Heart right ventricle (tissue), 16 donors: ENCODE measurements at regions of chr11 and their contacts with region 1.

Region 1: DNA sequence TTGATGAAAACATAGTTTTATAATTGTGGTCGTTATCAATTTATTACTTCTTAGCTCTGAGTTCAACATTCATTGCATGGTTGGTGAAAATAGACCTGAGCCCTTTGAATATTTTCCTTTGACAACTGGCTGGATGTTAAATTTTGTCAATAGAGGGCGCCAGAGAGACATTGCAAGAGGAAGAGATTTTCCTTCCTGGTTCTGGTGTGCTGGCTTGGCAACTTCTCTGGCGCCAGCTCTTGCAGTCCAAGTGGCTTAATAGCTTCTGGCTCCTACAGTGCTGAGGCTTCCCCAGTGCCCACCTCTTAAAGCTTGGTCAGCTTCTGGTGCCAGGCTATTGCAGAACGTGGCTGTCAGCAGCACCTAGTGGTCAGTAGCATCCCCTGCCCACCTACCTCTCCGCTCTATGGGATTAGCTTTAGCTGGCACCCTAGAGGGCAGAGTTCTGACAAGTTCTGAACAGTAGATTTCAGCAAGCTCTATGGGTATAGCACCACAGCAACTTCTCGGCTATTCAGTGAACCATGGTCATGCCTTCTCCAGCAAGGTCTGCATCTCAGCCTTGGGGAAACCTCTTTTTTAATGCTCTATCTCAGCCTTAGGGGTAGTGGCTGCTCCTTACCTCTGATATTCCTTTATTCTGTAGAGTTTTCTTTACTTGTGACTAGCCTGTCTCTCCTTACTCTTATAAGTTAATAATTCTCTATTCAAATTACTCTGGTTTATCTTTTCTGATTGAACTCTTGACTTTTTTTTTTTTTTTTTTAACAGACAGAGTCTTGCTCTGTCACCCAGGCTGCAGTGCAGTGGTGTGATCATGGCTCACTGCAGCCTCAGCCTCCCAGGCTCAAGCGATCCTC is 59.4 kb downstream of the ACER3 start:
- DNase-seq: peak; percentile 60 to 81
- ATAC-seq: peak; percentile 87 to 96 (median 89)
- H3K4me3 ChIP-seq: peak overlapping the region in 1 of 10 donors; percentile 25
- H3K27ac ChIP-seq: no peak overlapping the region
- H3K4me1 ChIP-seq: peaks cover 0 to 18% (median 12%) of the 10 kb centered on the region in 9 donors
- H3K27me3 ChIP-seq: no peaks in the 10 kb centered on the region
- CTCF ChIP-seq: peak; percentile 86 to 95 (median 89)

Region 2: GRCh38 chr11:76462317-76462716 is 457.8 kb before region 1 on chr11:
- intact Hi-C with region 1: no loop called
- DNase-seq: no peak
- ATAC-seq: no peak
- H3K4me3 ChIP-seq: no peak overlapping the region
- H3K27ac ChIP-seq: no peak overlapping the region
- H3K4me1 ChIP-seq: peaks cover 0 to 10% (median 5%) of the 10 kb centered on the region in 9 donors
- H3K27me3 ChIP-seq: no peaks in the 10 kb centered on the region
- CTCF ChIP-seq: no peak

Region 3: GRCh38 chr11:76721755-76722677 is 198.1 kb before region 1 on chr11:
- intact Hi-C with region 1: loop called in 1 of 10 experiments (anchors 5 kb)
- DNase-seq: peak; percentile 84 to 85
- ATAC-seq: peak; percentile 86 to 97 (median 92)
- H3K4me3 ChIP-seq: peak overlapping the region in 3 of 10 donors; percentile 16 to 20 (median 20)
- H3K27ac ChIP-seq: no peak overlapping the region
- H3K4me1 ChIP-seq: peaks cover 0 to 12% (median 7%) of the 10 kb centered on the region in 9 donors
- H3K27me3 ChIP-seq: peaks cover 0 to 23% (median 5%) of the 10 kb centered on the region in 7 donors
- CTCF ChIP-seq: peak; percentile 75 to 94 (median 91)

Region 4: DNA sequence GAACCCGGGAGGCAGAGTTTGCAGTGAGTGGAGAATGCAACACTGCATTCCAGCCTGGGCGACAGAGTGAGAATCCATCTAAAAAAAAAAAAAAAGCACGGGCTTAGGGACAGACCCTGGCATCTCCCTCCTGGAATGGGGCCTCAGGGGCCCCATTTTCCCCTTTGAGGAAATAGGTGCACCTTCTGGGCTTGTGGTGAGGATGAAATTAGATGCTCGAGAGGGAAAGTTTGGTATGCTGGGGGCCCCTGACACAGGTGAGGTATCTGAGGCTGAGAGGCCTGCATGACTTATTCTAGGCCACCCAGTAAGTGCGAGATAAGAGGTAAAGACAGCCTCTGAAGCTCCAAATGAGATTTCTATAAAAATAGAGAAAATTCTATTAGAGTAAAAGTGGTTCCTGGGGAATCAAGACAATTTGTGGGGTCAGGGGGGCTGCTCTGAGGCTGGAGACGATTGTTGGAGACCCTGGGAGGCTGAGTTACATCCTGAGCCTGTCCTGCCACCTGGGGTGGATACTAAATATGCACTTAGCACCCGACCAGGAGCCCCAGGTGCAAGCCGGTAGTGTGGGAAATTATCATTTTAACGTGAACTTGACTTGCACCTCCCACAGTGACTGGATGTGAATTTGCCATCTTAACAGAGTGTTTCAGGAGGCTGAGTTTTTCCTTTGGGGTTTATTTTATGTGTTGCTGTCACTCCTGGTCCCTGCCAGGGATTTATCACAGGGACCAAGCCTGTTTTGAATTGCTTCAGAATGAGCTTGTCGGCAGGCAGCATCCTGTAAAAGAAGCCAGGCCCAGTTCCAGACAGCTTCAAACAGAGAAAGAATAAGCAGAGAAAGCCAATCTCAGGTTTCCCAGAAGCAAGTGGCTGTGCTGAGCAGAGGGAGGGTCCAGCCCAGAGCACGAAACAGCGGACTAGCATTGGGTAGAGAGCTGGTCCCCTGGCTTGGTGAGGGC is 185.4 kb before region 1 on chr11:
- intact Hi-C with region 1: loop called in 6 of 10 experiments (anchors 5 kb)
- DNase-seq: no peak
- ATAC-seq: peak in 2 of 8 donors; percentile 4 to 43
- H3K4me3 ChIP-seq: no peak overlapping the region
- H3K27ac ChIP-seq: no peak overlapping the region
- H3K4me1 ChIP-seq: peaks cover 0 to 32% (median 3%) of the 10 kb centered on the region in 9 donors
- H3K27me3 ChIP-seq: peaks cover 0 to 4% (median 0%) of the 10 kb centered on the region in 7 donors
- CTCF ChIP-seq: no peak

Region 5: GRCh38 chr11:76807206-76807875 is 112.8 kb before region 1 on chr11:
- intact Hi-C with region 1: loop called (anchors 1 to 5 kb)
- DNase-seq: peak; percentile 87 to 88
- ATAC-seq: peak; percentile 76 to 92 (median 86)
- H3K4me3 ChIP-seq: peak overlapping the region in 5 of 10 donors; percentile 2 to 38 (median 15)
- H3K27ac ChIP-seq: peak overlapping the region in 2 of 10 donors; percentile 13 to 21
- H3K4me1 ChIP-seq: peaks cover 0 to 40% (median 18%) of the 10 kb centered on the region in 9 donors
- H3K27me3 ChIP-seq: no peaks in the 10 kb centered on the region
- CTCF ChIP-seq: peak; percentile 63 to 88 (median 84)

Region 6: GRCh38 chr11:76860539-76861475 is 59.3 kb before region 1 on chr11 and contains the start of gene ACER3:
- intact Hi-C with region 1: loop called in 3 of 10 experiments (anchors 5 kb)
- DNase-seq: peak; percentile 89 to 95
- ATAC-seq: peak; percentile 97 to 100 (median 98)
- H3K4me3 ChIP-seq: peak within 1 kb of the TSS; percentile 62 to 94 (median 82)
- H3K27ac ChIP-seq: peak within 1 kb of the TSS; percentile 63 to 95 (median 89)
- H3K4me1 ChIP-seq: peaks cover 0 to 70% (median 32%) of the 10 kb centered on the region in 9 donors
- H3K27me3 ChIP-seq: no peaks in the 10 kb centered on the region
- CTCF ChIP-seq: peak in 4 of 9 donors; percentile 12 to 36 (median 32)
- total RNA-seq, gene ACER3: 8.9 to 14.8 (median 10.6) TPM

Region 7: GRCh38 chr11:77039491-77040400 is 119.6 kb after region 1 on chr11:
- intact Hi-C with region 1: loop called in 1 of 10 experiments (anchors 10 kb)
- DNase-seq: peak in 1 of 2 donors; percentile 28
- ATAC-seq: peak; percentile 35 to 80 (median 45)
- H3K4me3 ChIP-seq: peak overlapping the region; percentile 12 to 54 (median 42)
- H3K27ac ChIP-seq: no peak overlapping the region
- H3K4me1 ChIP-seq: peaks cover 2 to 14% (median 11%) of the 10 kb centered on the region in 9 donors
- H3K27me3 ChIP-seq: peaks cover 7 to 74% (median 66%) of the 10 kb centered on the region in 7 donors
- CTCF ChIP-seq: peak in 7 of 9 donors; percentile 34 to 55 (median 46)

Region 8: GRCh38 chr11:77091146-77091940 is 171.2 kb after region 1 on chr11:
- intact Hi-C with region 1: loop called in 4 of 10 experiments (anchors 5 to 10 kb)
- DNase-seq: peak; percentile 78 to 80
- ATAC-seq: peak; percentile 68 to 80 (median 78)
- H3K4me3 ChIP-seq: no peak overlapping the region
- H3K27ac ChIP-seq: no peak overlapping the region
- H3K4me1 ChIP-seq: peaks cover 0 to 8% (median 0%) of the 10 kb centered on the region in 9 donors
- H3K27me3 ChIP-seq: no peaks in the 10 kb centered on the region
- CTCF ChIP-seq: peak; percentile 80 to 94 (median 91)